Posterior cingulate gyrus (tissue), 11 donors: ENCODE measurements at regions of chr2 and their contacts with region 1.

Region 1: GRCh38 chr2:184599872-184600222 is 1.5 kb downstream of the ZNF804A start:
- DNase-seq: no peak

Region 2: DNA sequence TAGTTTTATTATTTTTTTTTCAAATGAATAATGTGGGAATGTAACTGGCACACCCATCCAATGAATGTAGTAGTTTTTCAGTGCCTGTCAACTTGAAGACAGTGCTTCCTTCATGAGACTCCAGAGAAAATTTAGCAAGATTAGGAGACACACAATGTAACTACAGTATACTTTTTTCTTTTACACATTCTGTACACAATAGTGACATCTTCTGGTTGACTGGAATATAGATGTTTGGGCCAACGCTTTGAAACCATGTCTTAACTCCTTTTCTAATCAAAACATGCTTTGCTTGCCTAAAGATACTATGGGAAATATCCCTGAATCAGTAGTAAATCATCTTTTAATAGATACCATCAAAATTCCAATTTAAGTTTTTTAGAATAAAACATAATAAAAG is 1656.7 kb after region 1 on chr2:
- intact Hi-C with region 1: loop called (anchors 10 kb)
- DNase-seq: no peak